ENCODE measurements at regions of chr20 and their contacts with region 1.

Region 1: GRCh38 chr20:1286267-1287024 is 20.4 kb downstream of the SNPH start:
- DNase-seq: no peak
- H3K4me3 Mint-ChIP-seq: peak overlapping the region; percentile 6
- H3K27ac Mint-ChIP-seq: peak overlapping the region; percentile 1
- H3K4me1 Mint-ChIP-seq: peaks cover 19% of the 10 kb centered on the region
- H3K27me3 Mint-ChIP-seq: no peaks in the 10 kb centered on the region

Region 2: GRCh38 chr20:1266167-1266973 is 20.1 kb before region 1 on chr20 and contains the start of gene SNPH:
- intact Hi-C with region 1: loop called (anchors 1 kb)
- DNase-seq: peak; percentile 62
- H3K4me3 Mint-ChIP-seq: peak within 1 kb of the TSS; percentile 84
- H3K27ac Mint-ChIP-seq: peak within 1 kb of the TSS; percentile 76
- H3K4me1 Mint-ChIP-seq: peaks cover 25% of the 10 kb centered on the region
- H3K27me3 Mint-ChIP-seq: peaks cover 3% of the 10 kb centered on the region
- total RNA-seq, gene SNPH: 2.7 and 3.1 TPM in 2 replicates

Region 3: DNA sequence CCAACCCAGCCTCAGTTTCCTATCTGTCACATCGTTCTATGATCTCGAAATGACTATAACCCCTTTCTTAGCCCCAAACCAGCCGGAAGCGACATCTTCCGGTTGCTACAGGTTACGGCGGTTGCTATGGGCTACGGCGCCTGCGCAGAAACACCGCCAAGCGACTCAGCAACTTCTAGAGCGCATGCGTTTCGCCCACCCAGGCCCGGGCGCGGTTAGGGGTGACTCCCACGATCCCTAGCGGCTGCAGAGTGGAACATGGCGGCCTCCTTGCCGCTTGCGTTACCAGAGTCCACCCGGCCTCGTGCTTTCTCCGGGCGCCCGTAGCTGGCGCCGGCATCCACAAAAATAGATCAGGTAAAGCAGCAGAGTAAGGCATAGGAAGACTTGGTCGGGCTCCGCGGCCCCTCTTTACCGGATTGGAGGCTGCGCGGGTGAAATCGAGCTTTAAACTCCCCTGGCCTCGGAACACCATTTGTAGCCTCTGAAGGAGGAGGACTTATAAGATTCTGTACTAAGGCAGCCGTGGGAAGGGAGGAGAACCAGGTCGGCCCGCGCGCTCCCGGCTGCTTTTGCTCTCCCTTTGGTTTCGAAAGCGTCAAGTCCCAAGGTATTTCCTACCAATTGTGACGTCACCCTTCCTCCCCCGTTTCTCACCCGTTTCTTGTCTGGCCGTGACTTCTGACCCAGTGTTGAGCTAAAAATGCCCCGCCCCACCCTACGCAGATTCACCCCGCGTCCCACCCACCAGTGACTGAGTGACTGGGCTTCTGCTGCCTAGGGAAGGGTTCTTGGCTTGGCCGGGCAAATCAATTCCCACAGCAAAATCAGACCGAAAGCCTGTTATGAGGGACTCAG is 39.0 kb after region 1 on chr20:
- intact Hi-C with region 1: no loop called
- DNase-seq: peak; percentile 98
- H3K4me3 Mint-ChIP-seq: no peak overlapping the region
- H3K27ac Mint-ChIP-seq: no peak overlapping the region
- H3K4me1 Mint-ChIP-seq: peaks cover 31% of the 10 kb centered on the region
- H3K27me3 Mint-ChIP-seq: no peaks in the 10 kb centered on the region